HepG2 (cell line): ENCODE measurements at regions of chr11 and their contacts with region 1.

Region 1: GRCh38 chr11:86456052-86456939 is 81.6 kb downstream of the CCDC81 start:
- DNase-seq: peak; percentile 66
- ATAC-seq: peak; percentile 96
- H3K4me3 ChIP-seq: no peak overlapping the region
- H3K27ac ChIP-seq: no peak overlapping the region
- H3K4me1 ChIP-seq: no peaks in the 10 kb centered on the region
- H3K27me3 ChIP-seq: no peaks in the 10 kb centered on the region
- CTCF ChIP-seq: peak; percentile 92
- EP300 ChIP-seq: no peak
- POLR2A ChIP-seq: no peak
- RAD21 ChIP-seq: peak; percentile 86

Region 2: DNA sequence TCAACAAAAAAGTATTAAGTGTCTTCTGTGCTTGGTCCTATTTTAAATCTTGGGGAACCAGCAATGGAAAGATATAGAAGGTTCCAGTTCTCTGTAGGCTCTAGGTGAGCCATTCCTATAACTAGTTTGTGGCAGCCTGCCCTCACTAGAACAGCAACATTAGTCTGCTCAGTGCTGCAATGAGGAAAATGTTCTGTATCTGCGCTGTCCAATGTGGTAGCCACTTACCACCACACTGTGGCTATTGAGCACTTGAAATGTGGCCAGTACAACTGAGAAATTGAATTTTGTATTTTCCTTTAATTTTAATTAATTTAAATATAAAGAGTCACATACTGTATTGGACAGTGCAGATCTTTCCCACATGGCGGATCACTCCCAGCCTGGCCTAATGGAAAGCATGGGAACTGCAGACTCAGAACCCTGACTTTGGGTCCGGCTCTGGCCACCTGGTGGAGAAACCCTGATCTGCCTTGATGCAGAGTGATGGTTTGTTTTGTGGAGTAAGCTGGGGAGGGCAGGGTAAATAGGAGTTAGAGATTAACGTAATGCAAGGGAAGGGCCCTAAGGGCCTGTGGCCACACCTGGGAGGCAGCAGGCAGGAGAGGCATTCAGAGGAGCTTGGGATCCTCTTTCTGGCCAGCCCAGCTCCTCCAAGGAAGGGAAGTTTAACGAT is 115.1 kb after region 1 on chr11:
- CTCF ChIA-PET with region 1: interaction called, 48 read pairs
- POLR2A ChIA-PET with region 1: no interaction called
- in situ Hi-C with region 1: loop called (anchors 5 kb)
- intact Hi-C with region 1: loop called (anchors 1 kb)
- DNase-seq: peak; percentile 69
- ATAC-seq: peak; percentile 100
- H3K4me3 ChIP-seq: no peak overlapping the region
- H3K27ac ChIP-seq: no peak overlapping the region
- H3K4me1 ChIP-seq: no peaks in the 10 kb centered on the region
- H3K27me3 ChIP-seq: 0 out of 5 replicates have a peak, but pooled peaks cover under 1 to 3% of the 10 kb centered on the region in 2 experiments
- CTCF ChIP-seq: peak; percentile 68
- EP300 ChIP-seq: no peak
- POLR2A ChIP-seq: no peak
- RAD21 ChIP-seq: peak; percentile 67; the same call in 1 of the 2 replicates

Region 3: DNA sequence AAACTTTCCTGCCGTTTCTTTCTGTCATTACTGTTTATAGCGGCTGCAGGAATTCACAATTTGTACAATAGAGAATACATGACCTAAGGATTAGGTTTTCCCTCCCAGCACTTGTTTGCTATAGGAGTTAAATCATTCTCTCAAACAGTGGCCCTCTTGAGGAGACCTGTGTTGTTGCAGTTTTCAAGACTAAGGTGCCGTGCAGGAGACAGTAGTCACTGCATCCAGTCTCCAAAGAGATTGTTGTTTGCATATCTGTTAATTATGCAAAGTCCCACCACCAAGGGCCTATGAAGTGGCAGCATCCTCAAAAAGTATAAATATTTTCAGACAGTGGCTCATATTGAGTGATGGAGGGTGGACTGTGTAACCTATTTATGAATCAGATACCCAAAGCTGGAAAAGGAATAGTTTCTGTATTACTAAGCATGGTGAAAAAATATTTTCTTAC is 346.3 kb after region 1 on chr11:
- CTCF ChIA-PET with region 1: interaction called, 7 read pairs
- POLR2A ChIA-PET with region 1: no interaction called
- in situ Hi-C with region 1: no loop called
- intact Hi-C with region 1: loop called (anchors 5 kb)
- DNase-seq: peak; percentile 40
- ATAC-seq: peak; percentile 74
- H3K4me3 ChIP-seq: no peak overlapping the region
- H3K27ac ChIP-seq: no peak overlapping the region
- H3K4me1 ChIP-seq: peaks cover 6% of the 10 kb centered on the region; the same call in 1 of the 2 replicates
- H3K27me3 ChIP-seq: peaks cover 8 to 36% of the 10 kb centered on the region in 2 experiments; a peak in 4 of 5 replicates
- CTCF ChIP-seq: peak; percentile 39
- EP300 ChIP-seq: no peak
- POLR2A ChIP-seq: no peak
- RAD21 ChIP-seq: no peak